ENCODE measurements at regions of chr11 and their contacts with region 1.

Region 1: GRCh38 chr11:72722050-72722748 is 30.0 kb downstream of the ARAP1 start:
- DNase-seq: peak; percentile 87 to 90 (median 90)
- H3K4me3 ChIP-seq: peak overlapping the region; percentile 72
- H3K27ac ChIP-seq: peak overlapping the region; percentile 43 to 84
- H3K4me1 ChIP-seq: peaks cover 25% of the 10 kb centered on the region
- H3K27me3 ChIP-seq: no peaks in the 10 kb centered on the region
- CTCF ChIP-seq: no peak
- EP300 ChIP-seq: no peak
- POLR2A ChIP-seq: peak; percentile 38

Region 2: DNA sequence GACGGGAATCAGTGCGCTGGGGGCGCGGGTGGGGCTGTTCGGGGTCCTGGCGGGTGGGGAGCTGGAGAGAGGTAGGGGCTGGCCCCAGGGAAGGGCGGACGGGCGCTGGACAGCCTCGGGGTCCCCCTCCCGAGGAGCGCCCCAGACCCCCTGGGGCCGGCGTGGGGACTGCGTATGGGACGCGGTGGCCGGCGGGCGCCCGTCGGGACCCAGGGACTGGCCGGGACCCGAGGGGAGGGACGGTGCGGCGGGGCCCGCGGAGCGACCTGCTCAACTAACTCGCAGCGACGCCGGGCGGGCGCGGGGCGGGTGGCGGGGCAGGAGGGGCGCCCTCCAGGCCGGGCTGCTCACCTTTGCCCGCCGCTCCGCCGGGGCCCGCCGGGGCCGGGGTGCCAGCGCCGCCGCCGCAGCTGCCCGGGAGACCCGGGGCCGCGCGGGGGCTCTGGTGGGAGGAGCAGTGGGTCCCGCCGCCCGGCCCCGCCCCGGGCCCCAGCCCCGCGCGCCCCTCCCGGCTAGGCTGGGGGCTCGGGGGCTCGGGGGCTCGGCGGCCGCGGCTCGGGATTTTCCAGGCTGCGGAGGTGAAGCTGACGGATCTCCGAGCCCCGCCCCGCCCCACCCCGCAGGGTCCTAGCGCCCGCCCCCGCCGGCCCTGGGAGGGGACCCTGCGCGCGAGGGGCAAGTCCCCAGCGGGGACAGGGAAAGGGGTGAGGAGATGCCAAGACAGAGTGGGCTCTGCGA is 59.3 kb after region 1 on chr11:
- intact Hi-C with region 1: no loop called
- DNase-seq: peak in 4 of 5 donors; percentile 35 to 59 (median 48)
- H3K4me3 ChIP-seq: peak overlapping the region; percentile 94
- H3K27ac ChIP-seq: peak overlapping the region; percentile 26 to 78
- H3K4me1 ChIP-seq: peaks cover 5% of the 10 kb centered on the region
- H3K27me3 ChIP-seq: no peaks in the 10 kb centered on the region
- CTCF ChIP-seq: no peak
- EP300 ChIP-seq: no peak
- POLR2A ChIP-seq: no peak

Region 3: DNA sequence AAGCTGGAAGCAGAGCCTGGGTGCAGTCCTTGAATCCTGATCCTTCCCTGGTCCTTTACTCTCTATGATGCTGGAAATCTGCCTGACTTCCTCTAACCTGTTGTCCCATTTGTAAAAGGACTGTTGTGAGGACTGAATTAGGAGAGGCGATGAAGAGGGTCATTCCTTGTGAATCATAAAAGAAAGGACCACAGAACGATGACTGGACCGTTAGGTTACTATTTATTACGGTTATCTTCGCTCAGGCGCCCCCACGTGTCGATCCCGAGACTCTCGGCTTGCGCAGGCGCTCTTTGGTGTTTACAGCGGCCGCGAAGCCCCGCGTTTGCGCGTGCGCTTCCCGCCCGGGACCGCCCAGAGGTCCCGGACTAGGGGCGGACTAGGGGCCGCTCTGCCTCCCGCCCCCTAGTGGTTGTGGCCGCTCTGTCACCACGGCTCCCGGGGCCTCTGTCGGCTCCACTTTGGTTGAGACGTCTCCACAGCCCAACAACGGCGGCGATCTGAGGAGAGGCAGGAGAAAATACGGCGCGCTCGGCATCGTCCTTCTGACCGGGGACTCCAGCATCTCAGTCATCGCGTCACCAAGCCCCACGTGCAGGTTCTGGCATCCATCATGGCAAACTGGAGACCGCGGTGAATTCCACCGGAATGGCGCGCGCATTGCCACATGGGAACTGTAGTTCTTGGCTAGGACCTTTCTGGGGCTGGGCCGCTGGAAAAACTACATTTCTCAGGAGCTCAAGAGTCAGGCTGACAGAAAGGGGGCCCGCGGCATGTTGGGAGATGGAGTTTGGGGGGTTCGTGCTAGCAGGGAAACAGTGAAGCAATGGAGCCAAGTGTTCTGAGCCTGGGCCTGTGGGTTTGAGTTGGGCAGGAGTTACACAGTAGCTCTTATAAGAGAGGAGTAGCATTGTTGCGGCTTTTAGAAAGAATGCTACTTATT is 71.5 kb after region 1 on chr11 and contains the start of gene STARD10:
- intact Hi-C with region 1: loop called (anchors 5 kb)
- DNase-seq: peak; percentile 95 to 98 (median 97)
- H3K4me3 ChIP-seq: peak within 1 kb of the TSS; percentile 69
- H3K27ac ChIP-seq: peak within 1 kb of the TSS; percentile 72 to 89
- H3K4me1 ChIP-seq: peaks cover 8% of the 10 kb centered on the region
- H3K27me3 ChIP-seq: no peaks in the 10 kb centered on the region
- CTCF ChIP-seq: peak; percentile 97 to 100 (median 100)
- EP300 ChIP-seq: peak; percentile 49
- POLR2A ChIP-seq: peak; percentile 57
- total RNA-seq, gene STARD10: 38.7 to 56.1 (median 46.3) TPM

Region 4: GRCh38 chr11:72799441-72799840 is 77.2 kb after region 1 on chr11:
- intact Hi-C with region 1: loop called (anchors 5 kb)
- DNase-seq: no peak
- H3K4me3 ChIP-seq: no peak overlapping the region
- H3K27ac ChIP-seq: no peak overlapping the region
- H3K4me1 ChIP-seq: no peaks in the 10 kb centered on the region
- H3K27me3 ChIP-seq: no peaks in the 10 kb centered on the region
- CTCF ChIP-seq: no peak
- EP300 ChIP-seq: no peak
- POLR2A ChIP-seq: no peak

Region 5: DNA sequence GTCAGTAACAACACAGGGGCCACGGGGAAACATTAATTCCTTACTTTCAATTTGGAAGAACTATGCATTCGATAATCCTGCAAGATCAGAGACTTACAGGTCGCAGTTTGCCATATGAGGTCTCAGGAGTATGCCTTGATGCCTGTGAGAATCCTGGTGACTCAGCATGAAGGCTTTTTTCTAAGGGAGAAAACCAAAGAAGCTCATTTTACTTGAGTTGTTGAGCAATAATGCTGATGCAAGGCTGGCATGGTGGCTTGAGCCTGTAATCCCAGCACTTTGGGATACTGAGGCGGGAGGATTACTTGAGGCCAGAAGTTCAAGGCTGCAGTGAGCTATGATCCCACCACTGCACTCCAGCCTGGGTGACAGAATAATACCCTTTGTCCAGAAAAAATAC is 118.6 kb after region 1 on chr11:
- intact Hi-C with region 1: no loop called
- DNase-seq: no peak
- H3K4me3 ChIP-seq: no peak overlapping the region
- H3K27ac ChIP-seq: no peak overlapping the region
- H3K4me1 ChIP-seq: peaks cover 10% of the 10 kb centered on the region
- H3K27me3 ChIP-seq: no peaks in the 10 kb centered on the region
- CTCF ChIP-seq: no peak
- EP300 ChIP-seq: no peak
- POLR2A ChIP-seq: no peak

Region 6: DNA sequence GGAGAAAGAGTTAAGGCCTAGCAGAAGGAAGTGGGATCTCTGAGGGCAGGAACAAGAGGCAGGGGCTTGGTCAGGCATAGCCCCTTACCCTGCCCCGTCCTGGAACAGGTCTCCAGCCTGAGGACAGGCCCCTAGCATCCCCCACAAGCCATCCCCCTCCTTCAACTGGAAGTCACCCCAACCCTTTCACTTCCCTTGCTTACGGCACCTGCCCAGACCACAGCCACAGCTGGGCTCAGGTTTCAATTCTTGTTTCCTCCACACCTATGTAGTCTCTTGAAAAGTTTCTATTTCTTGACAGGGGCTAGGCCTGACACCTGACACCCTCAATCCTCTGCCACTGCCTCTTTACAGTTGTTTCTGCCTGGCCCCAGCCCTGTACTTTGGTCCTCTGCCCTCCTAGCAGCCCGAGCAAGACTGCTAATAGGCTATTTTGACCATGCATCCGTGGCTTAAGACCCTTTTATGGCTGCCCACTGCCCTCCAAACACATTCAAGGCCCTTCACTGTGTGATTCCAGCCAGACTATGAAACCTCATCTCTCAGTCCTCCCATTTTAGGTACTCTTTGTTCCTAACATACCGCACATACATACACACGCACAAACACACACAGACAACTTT is 430.8 kb after region 1 on chr11:
- intact Hi-C with region 1: no loop called
- DNase-seq: no peak
- H3K4me3 ChIP-seq: no peak overlapping the region
- H3K27ac ChIP-seq: no peak overlapping the region
- H3K4me1 ChIP-seq: peaks cover 6% of the 10 kb centered on the region
- H3K27me3 ChIP-seq: no peaks in the 10 kb centered on the region
- CTCF ChIP-seq: no peak
- EP300 ChIP-seq: no peak
- POLR2A ChIP-seq: no peak

Region 7: GRCh38 chr11:73164803-73165540 is 442.8 kb after region 1 on chr11:
- intact Hi-C with region 1: loop called in 2 of 4 experiments (anchors 10 kb)
- DNase-seq: peak in 1 of 5 donors; percentile 9
- H3K4me3 ChIP-seq: no peak overlapping the region
- H3K27ac ChIP-seq: no peak overlapping the region
- H3K4me1 ChIP-seq: peaks cover 14% of the 10 kb centered on the region
- H3K27me3 ChIP-seq: no peaks in the 10 kb centered on the region
- CTCF ChIP-seq: no peak
- EP300 ChIP-seq: no peak
- POLR2A ChIP-seq: no peak

Region 8: GRCh38 chr11:73177778-73178577 is 455.8 kb after region 1 on chr11:
- intact Hi-C with region 1: loop called in 2 of 4 experiments (anchors 5 to 10 kb)
- DNase-seq: peak; percentile 88 to 92 (median 90)
- H3K4me3 ChIP-seq: no peak overlapping the region
- H3K27ac ChIP-seq: peak overlapping the region in 1 of 2 donors; percentile 78
- H3K4me1 ChIP-seq: peaks cover 34% of the 10 kb centered on the region
- H3K27me3 ChIP-seq: no peaks in the 10 kb centered on the region
- CTCF ChIP-seq: peak; percentile 66 to 95 (median 86)
- EP300 ChIP-seq: no peak
- POLR2A ChIP-seq: peak; percentile 24

Region 9: GRCh38 chr11:73242251-73243079 is 520.3 kb after region 1 on chr11:
- intact Hi-C with region 1: loop called in 1 of 4 experiments (anchors 10 kb)
- DNase-seq: peak; percentile 73 to 90 (median 78)
- H3K4me3 ChIP-seq: peak overlapping the region; percentile 11
- H3K27ac ChIP-seq: no peak overlapping the region
- H3K4me1 ChIP-seq: peaks cover 2% of the 10 kb centered on the region
- H3K27me3 ChIP-seq: no peaks in the 10 kb centered on the region
- CTCF ChIP-seq: peak; percentile 64 to 79 (median 73)
- EP300 ChIP-seq: no peak
- POLR2A ChIP-seq: no peak

Measured in ovary (tissue), 10 donors.